ENCODE measurements at regions of chr14 and their contacts with region 1.

Region 1: DNA sequence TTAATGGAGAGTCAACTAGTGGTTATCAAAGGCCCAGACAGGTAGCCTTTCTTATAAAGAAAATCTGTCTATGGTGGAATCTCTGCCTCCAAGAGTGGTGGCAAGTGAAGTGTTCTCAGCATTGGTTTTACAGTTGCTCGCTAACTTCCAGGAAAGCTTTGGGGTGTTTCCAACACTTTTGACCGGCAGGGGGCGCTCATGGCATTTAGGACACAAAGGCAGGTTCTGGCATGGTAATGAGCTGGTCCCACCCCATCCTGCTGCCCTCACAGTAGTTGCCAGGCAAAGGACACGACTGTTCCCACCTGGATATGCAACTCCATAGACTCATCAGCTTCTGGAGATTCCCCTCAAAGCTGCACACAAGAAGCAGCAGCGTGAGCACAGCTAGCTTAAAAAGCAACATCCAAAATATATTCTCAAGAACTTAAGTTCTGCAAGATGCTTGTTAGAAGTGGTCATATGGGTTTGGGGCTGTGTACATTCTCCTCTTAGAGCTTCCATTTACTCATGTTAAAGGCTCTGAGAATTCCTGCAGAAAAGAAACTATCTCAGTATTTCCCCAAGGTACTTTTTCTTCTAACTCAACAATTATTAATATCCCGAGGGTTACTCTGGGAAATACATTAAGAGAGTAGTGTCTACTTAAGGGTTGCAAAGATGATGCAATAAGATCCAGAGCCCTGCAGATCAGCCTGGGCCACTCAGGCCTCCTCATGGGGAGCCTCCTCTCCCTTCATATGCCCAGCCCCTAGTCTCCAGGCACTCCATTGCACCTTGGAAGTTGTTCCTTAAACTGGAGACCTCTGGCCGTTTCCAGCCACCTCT is 14.8 kb downstream of the PROX2 start:
- DNase-seq: peak; percentile 90
- H3K4me3 ChIP-seq: no peak overlapping the region
- H3K27ac ChIP-seq: no peak overlapping the region
- H3K4me1 ChIP-seq: peaks cover 6% of the 10 kb centered on the region
- CTCF ChIP-seq: peak; percentile 96

Region 2: GRCh38 chr14:74793506-74794168 is 67.5 kb before region 1 on chr14:
- CTCF ChIA-PET with region 1: no interaction called
- POLR2A ChIA-PET with region 1: no interaction called
- intact Hi-C with region 1: no loop called
- DNase-seq: peak; percentile 16
- H3K4me3 ChIP-seq: no peak overlapping the region
- H3K27ac ChIP-seq: no peak overlapping the region
- H3K4me1 ChIP-seq: peaks cover 18% of the 10 kb centered on the region
- CTCF ChIP-seq: peak; percentile 69

Region 3: GRCh38 chr14:74905375-74906142 is 44.4 kb after region 1 on chr14:
- CTCF ChIA-PET with region 1: interaction called, 16 read pairs
- POLR2A ChIA-PET with region 1: interaction called, 4 read pairs
- intact Hi-C with region 1: loop called (anchors 1 kb)
- DNase-seq: peak; percentile 68
- H3K4me3 ChIP-seq: no peak overlapping the region
- H3K27ac ChIP-seq: no peak overlapping the region
- H3K4me1 ChIP-seq: peaks cover 8% of the 10 kb centered on the region
- CTCF ChIP-seq: peak; percentile 98

Measured in OCI-LY7 (cell line).